Activated CD4-positive, alpha-beta memory T cell treated with anti-CD3 and anti-CD28 coated beads for 36 hours (primary cell): ENCODE measurements at regions of chr1 and their contacts with region 1.

Region 1: DNA sequence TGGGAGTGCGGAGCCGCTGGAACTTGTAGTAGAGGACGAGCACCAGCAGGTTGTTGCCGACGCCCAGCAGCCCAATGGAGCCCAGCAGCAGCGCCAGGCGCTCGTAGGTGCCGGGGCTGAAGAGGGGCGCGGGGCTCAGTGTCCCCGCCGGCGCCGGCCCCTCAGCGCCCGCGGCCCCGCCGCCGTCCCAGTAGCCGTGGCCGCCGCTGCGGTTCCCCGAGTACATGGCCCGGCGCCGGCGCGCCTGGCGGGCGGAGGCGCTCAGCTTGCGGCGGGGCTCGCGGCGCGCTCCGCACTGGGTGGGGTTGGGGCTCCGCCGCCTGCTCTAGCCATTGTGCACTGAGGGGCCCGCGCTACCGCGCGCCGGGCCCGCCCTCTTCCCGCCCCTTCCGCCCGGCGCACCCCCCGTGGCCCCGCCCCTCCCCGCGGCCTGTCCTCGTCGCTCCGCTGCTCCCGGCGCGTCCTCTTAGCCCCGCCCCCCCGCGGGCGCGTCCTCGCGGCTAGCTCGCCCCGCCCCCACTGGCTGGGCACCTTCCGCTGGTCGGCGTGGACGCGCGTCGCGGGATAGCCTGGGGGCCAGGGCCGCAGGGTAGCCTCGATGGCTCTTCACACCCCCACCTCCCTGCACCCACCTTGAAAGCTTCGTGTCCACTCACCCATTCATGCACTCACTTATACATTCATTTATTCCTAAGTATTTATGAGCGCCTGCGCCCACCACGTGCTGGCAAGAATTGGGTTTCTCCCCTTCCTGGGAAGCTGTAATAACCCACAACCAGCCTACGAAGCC is at the starts of genes CHML and OPN3:
- DNase-seq: peak; percentile 95
- H3K4me3 Mint-ChIP-seq: peak within 1 kb of the TSS; percentile 85
- H3K27ac Mint-ChIP-seq: peak within 1 kb of the TSS; percentile 68
- H3K4me1 Mint-ChIP-seq: peaks cover 44% of the 10 kb centered on the region
- H3K27me3 Mint-ChIP-seq: no peaks in the 10 kb centered on the region
- total RNA-seq, gene CHML: 12.5 to 13.8 TPM
- total RNA-seq, gene OPN3: 8.0 to 9.0 TPM

Region 2: GRCh38 chr1:241551759-241552638 is 88.2 kb before region 1 on chr1:
- CTCF ChIA-PET with region 1: no interaction called
- POLR2A ChIA-PET with region 1: no interaction called
- intact Hi-C with region 1: loop called (anchors 1 kb)
- DNase-seq: peak; percentile 71
- H3K4me3 Mint-ChIP-seq: peak overlapping the region; percentile 68
- H3K27ac Mint-ChIP-seq: peak overlapping the region; percentile 96
- H3K4me1 Mint-ChIP-seq: peaks cover 23% of the 10 kb centered on the region
- H3K27me3 Mint-ChIP-seq: no peaks in the 10 kb centered on the region

Region 3: GRCh38 chr1:241592273-241592958 is 47.8 kb before region 1 on chr1:
- CTCF ChIA-PET with region 1: no interaction called
- POLR2A ChIA-PET with region 1: no interaction called
- intact Hi-C with region 1: loop called (anchors 1 kb)
- DNase-seq: no peak
- H3K4me3 Mint-ChIP-seq: no peak overlapping the region
- H3K27ac Mint-ChIP-seq: peak overlapping the region; percentile 49
- H3K4me1 Mint-ChIP-seq: peaks cover 27% of the 10 kb centered on the region
- H3K27me3 Mint-ChIP-seq: no peaks in the 10 kb centered on the region

Region 4: GRCh38 chr1:241627453-241628259 is 12.6 kb before region 1 on chr1:
- CTCF ChIA-PET with region 1: interaction called, 4 read pairs
- POLR2A ChIA-PET with region 1: no interaction called
- intact Hi-C with region 1: loop called (anchors 1 kb)
- DNase-seq: peak; percentile 36
- H3K4me3 Mint-ChIP-seq: peak overlapping the region; percentile 14
- H3K27ac Mint-ChIP-seq: peak overlapping the region; percentile 20
- H3K4me1 Mint-ChIP-seq: peaks cover 10% of the 10 kb centered on the region
- H3K27me3 Mint-ChIP-seq: no peaks in the 10 kb centered on the region

Region 5: DNA sequence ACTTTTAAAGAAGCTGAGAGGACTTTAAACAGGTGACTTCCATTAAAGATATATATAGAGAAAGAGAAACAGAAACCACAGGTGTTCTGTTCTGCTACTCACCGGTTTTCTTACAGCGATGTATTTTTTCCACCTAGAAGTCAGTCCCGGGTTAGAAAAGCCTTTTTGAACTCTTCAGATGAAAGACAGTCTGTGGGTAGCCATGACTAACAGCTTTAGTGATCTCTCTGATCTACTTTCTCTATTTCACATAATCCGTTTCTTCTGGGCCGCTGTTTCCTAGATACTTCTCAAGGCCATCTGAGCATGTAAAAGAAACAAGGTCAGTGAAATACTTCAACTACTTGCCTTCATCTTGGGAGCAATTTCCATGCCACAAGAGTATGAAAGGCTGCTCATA is 37.0 kb after region 1 on chr1:
- CTCF ChIA-PET with region 1: no interaction called
- POLR2A ChIA-PET with region 1: no interaction called
- intact Hi-C with region 1: loop called (anchors 1 kb)
- DNase-seq: no peak
- H3K4me3 Mint-ChIP-seq: no peak overlapping the region
- H3K27ac Mint-ChIP-seq: no peak overlapping the region
- H3K4me1 Mint-ChIP-seq: peaks cover 15% of the 10 kb centered on the region
- H3K27me3 Mint-ChIP-seq: peaks cover 2% of the 10 kb centered on the region